ENCODE measurements at regions of chr9 and their contacts with region 1.

Region 1: GRCh38 chr9:91193658-91194391 is 167.9 kb downstream of the AUH start:
- DNase-seq: peak; percentile 93

Region 2: DNA sequence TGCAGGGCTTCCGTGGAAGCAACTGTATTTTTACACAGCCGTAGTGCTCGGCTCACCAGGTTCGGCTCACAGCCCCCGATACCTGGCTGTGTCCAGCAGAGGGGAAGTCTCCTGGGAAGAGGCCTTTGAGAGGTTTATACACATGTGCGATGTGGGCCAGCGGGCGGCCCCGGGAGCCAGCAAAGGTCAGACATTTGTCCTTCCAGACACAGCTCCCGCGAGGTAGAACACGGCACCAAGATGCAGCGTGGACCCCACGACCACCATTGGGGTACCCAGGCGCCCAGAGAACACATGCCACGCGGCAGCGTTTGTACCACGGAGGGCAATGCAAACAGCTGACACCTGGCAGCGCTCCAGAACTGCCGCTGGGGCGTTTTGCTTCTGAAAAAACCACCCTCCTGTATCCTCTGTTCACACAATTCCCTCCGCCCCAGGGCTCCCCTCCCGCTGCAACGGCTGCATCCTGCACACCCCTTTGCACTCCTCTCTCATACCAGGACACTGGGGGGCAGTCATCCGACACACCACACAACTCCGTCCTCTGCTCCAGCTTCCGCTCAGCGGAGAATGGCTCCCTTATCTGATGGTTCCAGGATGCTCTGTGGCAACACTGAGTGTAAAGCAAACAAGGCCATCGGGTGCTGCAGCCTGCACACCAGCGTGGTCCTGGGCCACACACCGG is 156.9 kb before region 1 on chr9:
- intact Hi-C with region 1: loop called (anchors 5 kb)
- DNase-seq: peak; percentile 87

Region 3: DNA sequence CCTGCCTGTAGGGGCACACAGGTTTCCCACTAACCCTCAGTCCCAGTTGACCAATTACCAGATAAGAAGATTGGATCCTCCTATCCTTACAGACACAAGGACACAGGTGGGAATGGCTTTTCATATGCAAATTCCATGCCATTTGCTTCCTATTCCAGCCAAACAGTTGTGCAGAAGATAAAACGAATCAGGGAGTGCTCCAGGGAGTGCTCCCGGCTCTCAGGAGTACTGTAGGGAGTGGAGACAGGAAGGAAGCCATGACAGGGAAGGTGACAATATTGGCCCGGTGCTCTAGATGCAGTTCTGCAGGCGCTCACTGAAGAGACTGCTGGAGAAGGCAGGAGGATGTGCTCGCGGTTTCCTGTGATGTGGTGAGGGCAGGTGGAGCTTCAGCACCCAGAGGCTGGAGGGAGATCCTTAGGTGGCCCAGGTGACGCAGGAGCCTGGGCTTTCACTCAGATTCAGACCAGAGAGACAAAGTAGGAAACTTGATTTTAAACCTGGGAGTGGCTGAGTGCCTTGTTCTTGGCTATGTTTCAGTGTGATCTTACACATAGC is 92.1 kb before region 1 on chr9:
- intact Hi-C with region 1: loop called (anchors 1 kb)
- DNase-seq: no peak

Region 4: GRCh38 chr9:91117959-91118703 is 75.7 kb before region 1 on chr9:
- intact Hi-C with region 1: loop called (anchors 2 kb)
- DNase-seq: peak; percentile 92

Region 5: DNA sequence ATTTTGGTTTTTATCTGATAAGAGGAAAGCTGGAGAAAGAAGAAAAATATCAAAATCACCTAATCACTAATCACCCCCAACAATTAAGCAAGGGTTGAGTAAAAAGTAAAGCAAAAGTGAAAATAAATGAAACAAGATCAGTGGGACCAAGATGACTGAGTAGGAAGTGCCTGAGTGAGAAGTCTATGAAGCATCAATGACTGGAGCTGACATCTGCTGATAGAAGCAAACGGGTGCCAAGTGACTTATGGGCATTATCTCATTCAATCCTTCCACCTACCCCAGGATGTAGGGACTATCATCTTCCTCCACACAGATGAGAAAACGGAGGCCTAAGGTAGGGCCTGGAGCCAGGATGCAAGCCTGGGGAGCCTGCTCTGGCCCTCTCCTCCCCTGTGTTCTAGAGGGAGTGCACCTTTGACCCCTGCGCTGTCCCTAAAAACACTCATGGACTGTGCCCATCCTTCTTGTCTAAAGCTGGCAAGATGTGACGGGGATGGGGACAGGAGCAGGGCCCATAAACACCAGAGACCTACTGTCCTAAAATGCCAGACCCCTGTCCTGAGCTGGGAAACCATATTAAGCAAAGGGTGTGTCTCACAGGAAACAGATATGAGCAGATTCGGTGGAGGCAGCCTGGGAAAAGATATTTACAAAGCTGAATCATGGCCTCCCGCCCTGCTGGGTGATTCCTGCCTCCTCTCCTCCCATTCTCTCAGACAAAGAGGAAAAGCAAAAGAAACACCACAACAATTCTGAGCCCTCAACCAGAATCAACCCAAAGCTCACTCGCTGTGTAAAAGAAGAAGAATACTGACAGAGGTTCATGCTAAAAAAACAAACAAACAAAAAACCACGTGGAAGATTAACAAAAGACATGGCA is 51.8 kb after region 1 on chr9:
- intact Hi-C with region 1: loop called (anchors 5 kb)
- DNase-seq: no peak

Region 6: GRCh38 chr9:91301161-91301560 is 107.3 kb after region 1 on chr9:
- intact Hi-C with region 1: loop called (anchors 1 kb)
- DNase-seq: no peak

Region 7: GRCh38 chr9:91361291-91362050 is 167.6 kb after region 1 on chr9 and contains the start of gene AUH:
- intact Hi-C with region 1: loop called (anchors 2 kb)
- DNase-seq: peak; percentile 95
- total RNA-seq, gene AUH: 39.7 TPM

Measured in cardiac septum (tissue), 1 donor.